ENCODE measurements at regions of chr18 and their contacts with region 1.

Region 1: GRCh38 chr18:74623047-74623816 is 25.6 kb downstream of the ZNF407 start:
- DNase-seq: peak in 12 of 14 experiments; percentile 19 to 65 (median 38)
- ATAC-seq: peak; percentile 39
- H3K4me3 ChIP-seq: no peak overlapping the region
- H3K4me3 Mint-ChIP-seq: no peak overlapping the region
- H3K27ac ChIP-seq: no peak overlapping the region
- H3K27ac Mint-ChIP-seq: no peak overlapping the region
- H3K4me1 ChIP-seq: peaks cover 17% of the 10 kb centered on the region
- H3K4me1 Mint-ChIP-seq: peaks cover 20% of the 10 kb centered on the region
- H3K27me3 ChIP-seq: no peaks in the 10 kb centered on the region
- H3K27me3 Mint-ChIP-seq: no peaks in the 10 kb centered on the region
- CTCF ChIP-seq: peak; percentile 79

Region 2: DNA sequence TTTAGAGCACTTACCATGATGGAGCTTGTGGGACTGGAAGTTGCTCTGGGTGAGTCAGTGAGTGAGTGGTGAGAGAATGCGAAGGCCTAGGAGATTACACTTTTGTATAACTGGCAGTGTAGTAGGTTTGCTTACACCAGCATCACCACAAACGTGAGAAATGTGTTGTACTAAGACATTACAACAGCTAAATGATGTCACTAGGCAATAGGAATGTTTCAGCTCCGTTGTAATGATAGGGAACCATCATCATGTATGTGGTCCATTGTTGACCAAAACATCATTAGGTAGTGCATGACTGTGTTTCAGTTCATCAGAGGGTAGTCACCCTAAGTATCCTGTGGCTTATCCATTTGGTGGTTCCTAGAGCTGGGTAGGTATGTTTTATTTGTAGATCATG is 13.7 kb before region 1 on chr18:
- CTCF ChIA-PET with region 1: no interaction called
- POLR2A ChIA-PET with region 1: no interaction called
- intact Hi-C with region 1: no loop called
- DNase-seq: no peak
- ATAC-seq: no peak
- H3K4me3 ChIP-seq: no peak overlapping the region
- H3K4me3 Mint-ChIP-seq: no peak overlapping the region
- H3K27ac ChIP-seq: no peak overlapping the region
- H3K27ac Mint-ChIP-seq: no peak overlapping the region
- H3K4me1 ChIP-seq: peaks cover 4% of the 10 kb centered on the region
- H3K4me1 Mint-ChIP-seq: peaks cover 52% of the 10 kb centered on the region
- H3K27me3 ChIP-seq: no peaks in the 10 kb centered on the region
- H3K27me3 Mint-ChIP-seq: no peaks in the 10 kb centered on the region
- CTCF ChIP-seq: no peak

Region 3: DNA sequence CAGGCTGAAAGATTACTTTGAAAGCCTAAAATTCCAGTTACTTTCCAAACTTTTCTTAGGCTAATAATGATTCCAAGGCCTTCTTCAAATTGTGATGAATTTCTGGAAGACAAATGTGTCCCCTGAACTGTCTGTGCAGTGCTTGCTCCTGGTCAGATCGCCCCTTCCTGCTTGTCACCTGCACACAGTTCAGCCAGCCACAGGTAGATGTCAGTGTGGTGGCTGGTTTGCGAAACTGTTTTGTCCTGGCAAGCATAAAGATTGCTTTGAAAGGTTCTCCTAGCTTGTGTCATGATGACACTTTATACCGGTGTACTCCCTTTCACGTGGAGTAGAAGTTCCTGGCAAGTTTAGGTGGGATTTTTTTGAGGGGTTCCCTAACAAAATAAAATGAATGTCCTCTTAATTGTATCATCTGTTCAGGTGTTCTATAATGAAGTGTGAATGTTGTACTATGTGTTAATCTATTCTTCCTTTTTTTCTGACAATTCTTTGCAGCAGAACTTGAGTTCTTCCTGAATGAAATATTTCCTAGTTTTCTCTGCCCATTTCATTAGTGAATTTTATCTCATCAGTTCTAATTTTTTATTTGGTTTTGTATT is 273.3 kb after region 1 on chr18:
- CTCF ChIA-PET with region 1: no interaction called
- POLR2A ChIA-PET with region 1: no interaction called
- intact Hi-C with region 1: loop called in 1 of 2 experiments (anchors 10 kb)
- DNase-seq: peak; percentile 14 to 68 (median 42)
- ATAC-seq: peak; percentile 77
- H3K4me3 ChIP-seq: no peak overlapping the region
- H3K4me3 Mint-ChIP-seq: no peak overlapping the region
- H3K27ac ChIP-seq: no peak overlapping the region
- H3K27ac Mint-ChIP-seq: no peak overlapping the region
- H3K4me1 ChIP-seq: no peaks in the 10 kb centered on the region
- H3K4me1 Mint-ChIP-seq: peaks cover 6% of the 10 kb centered on the region
- H3K27me3 ChIP-seq: no peaks in the 10 kb centered on the region
- H3K27me3 Mint-ChIP-seq: no peaks in the 10 kb centered on the region
- CTCF ChIP-seq: peak; percentile 76

Region 4: GRCh38 chr18:75247611-75248421 is 624.6 kb after region 1 on chr18:
- CTCF ChIA-PET with region 1: no interaction called
- POLR2A ChIA-PET with region 1: no interaction called
- intact Hi-C with region 1: loop called in 1 of 2 experiments (anchors 10 kb)
- DNase-seq: peak in 3 of 14 experiments; percentile 63 to 82 (median 64)
- ATAC-seq: peak; percentile 61
- H3K4me3 ChIP-seq: peak overlapping the region; percentile 51
- H3K4me3 Mint-ChIP-seq: peak overlapping the region; percentile 85
- H3K27ac ChIP-seq: peak overlapping the region; percentile 66 to 83
- H3K27ac Mint-ChIP-seq: peak overlapping the region; percentile 88
- H3K4me1 ChIP-seq: peaks cover 63% of the 10 kb centered on the region
- H3K4me1 Mint-ChIP-seq: peaks cover 73% of the 10 kb centered on the region
- H3K27me3 ChIP-seq: no peaks in the 10 kb centered on the region
- H3K27me3 Mint-ChIP-seq: no peaks in the 10 kb centered on the region
- CTCF ChIP-seq: no peak

Region 5: GRCh38 chr18:75478996-75479880 is 856.0 kb after region 1 on chr18:
- CTCF ChIA-PET with region 1: no interaction called
- POLR2A ChIA-PET with region 1: no interaction called
- intact Hi-C with region 1: loop called (anchors 2 to 10 kb)
- DNase-seq: peak in 3 of 14 experiments; percentile 53 to 70 (median 68)
- ATAC-seq: peak; percentile 39
- H3K4me3 ChIP-seq: no peak overlapping the region
- H3K4me3 Mint-ChIP-seq: no peak overlapping the region
- H3K27ac ChIP-seq: no peak overlapping the region
- H3K27ac Mint-ChIP-seq: no peak overlapping the region
- H3K4me1 ChIP-seq: no peaks in the 10 kb centered on the region
- H3K4me1 Mint-ChIP-seq: no peaks in the 10 kb centered on the region
- H3K27me3 ChIP-seq: peaks cover 5 to 8% of the 10 kb centered on the region in 2 experiments
- H3K27me3 Mint-ChIP-seq: peaks cover 20% of the 10 kb centered on the region
- CTCF ChIP-seq: peak; percentile 67